Gastrocnemius medialis (tissue), 4 donors: ENCODE measurements at regions of chr1 and their contacts with region 1.

Region 1: DNA sequence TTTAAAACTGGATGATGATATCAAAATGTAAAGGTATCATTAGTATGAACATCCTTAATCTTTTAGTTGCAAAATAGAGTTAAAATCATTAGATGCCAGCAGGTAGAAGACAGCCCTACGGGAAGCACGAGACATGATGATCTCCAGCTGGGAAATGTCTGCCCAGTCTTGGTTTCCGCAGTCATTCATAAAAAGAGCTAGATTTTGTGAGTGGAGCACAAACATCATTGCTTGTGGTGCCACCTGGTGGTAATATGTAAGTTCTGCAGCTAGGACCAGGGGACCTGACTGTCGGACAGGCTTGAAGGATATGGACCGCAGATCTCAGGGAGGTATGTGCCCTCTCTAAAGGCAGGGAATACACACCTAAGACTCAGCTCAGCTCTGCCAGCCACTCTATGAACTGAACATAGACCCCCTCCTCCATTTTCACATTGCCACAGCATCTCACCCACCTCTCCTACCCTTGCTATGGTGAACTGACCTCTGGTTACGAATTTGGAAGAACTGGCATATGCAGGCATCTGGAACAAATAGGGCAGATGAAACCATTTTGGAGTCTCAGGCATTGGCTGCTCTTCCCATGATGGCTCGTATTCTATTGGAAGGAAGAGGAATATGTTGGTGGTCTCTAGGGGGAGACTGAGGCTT is 9.2 kb downstream of the FCMR start:
- DNase-seq: peak; percentile 48 to 69
- ATAC-seq: peak; percentile 55 to 56
- H3K4me3 ChIP-seq: no peak overlapping the region
- H3K27ac ChIP-seq: no peak overlapping the region
- H3K4me1 ChIP-seq: peaks cover 19 to 20% of the 10 kb centered on the region in 2 donors
- H3K27me3 ChIP-seq: peaks cover 0 to 4% (median 0%) of the 10 kb centered on the region in 3 donors
- CTCF ChIP-seq: peak; percentile 76 to 88 (median 87)
- POLR2A ChIP-seq: no peak

Region 2: DNA sequence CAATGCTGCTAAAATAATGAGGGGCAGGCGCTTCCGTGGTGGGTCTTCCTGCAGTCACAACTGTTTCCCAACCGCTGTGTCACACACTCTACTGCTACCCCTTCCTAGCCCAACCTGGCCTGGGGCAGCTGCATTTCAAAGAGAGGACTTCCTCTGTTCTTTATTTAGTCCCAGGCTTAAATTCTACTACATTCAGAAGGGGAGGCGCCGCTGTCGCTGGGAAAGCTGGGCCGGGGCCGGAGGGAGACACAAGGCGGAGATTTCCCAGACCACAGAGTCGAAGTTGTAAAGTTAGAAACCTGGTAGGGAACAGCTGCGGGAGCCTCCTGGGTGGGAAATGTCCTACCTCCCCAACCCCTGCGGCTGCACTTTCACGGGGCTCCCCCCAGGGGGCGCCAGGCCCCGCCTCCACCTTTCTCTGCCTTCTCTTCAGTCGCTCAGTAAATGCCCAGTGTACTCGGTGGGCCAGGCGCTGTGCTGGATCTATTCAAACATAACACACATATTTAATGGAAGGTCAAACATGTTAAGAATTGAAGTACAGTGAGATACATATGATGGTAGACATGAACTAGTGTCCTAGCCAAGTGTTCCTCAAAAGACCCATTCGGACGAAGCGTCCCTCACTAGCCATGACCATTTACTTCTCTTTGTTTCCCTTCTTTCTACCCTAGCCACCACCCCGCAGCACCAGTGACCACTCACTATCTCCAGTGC is 254.1 kb before region 1 on chr1:
- in situ Hi-C with region 1: loop called in 1 of 4 experiments (anchors 10 kb)
- intact Hi-C with region 1: loop called (anchors 1 kb)
- DNase-seq: peak; percentile 43 to 82
- ATAC-seq: peak; percentile 46 to 77
- H3K4me3 ChIP-seq: peak overlapping the region; percentile 42 to 53 (median 44)
- H3K27ac ChIP-seq: peak overlapping the region; percentile 90 to 97 (median 94)
- H3K4me1 ChIP-seq: peaks cover 28 to 56% of the 10 kb centered on the region in 2 donors
- H3K27me3 ChIP-seq: no peaks in the 10 kb centered on the region
- CTCF ChIP-seq: peak; percentile 91 to 96 (median 95)
- POLR2A ChIP-seq: no peak

Region 3: GRCh38 chr1:206725109-206725963 is 187.2 kb before region 1 on chr1:
- in situ Hi-C with region 1: loop called in 3 of 4 experiments (anchors 5 to 10 kb)
- intact Hi-C with region 1: no loop called
- DNase-seq: no peak
- ATAC-seq: no peak
- H3K4me3 ChIP-seq: no peak overlapping the region
- H3K27ac ChIP-seq: peak overlapping the region; percentile 81 to 95 (median 92)
- H3K4me1 ChIP-seq: peaks cover 69 to 75% of the 10 kb centered on the region in 2 donors
- H3K27me3 ChIP-seq: no peaks in the 10 kb centered on the region
- CTCF ChIP-seq: peak in 3 of 5 experiments; percentile 21 to 42 (median 42)
- POLR2A ChIP-seq: no peak

Region 4: GRCh38 chr1:206808615-206809014 is 104.0 kb before region 1 on chr1:
- in situ Hi-C with region 1: no loop called
- intact Hi-C with region 1: loop called (anchors 10 kb)
- DNase-seq: peak in 1 of 2 donors; percentile 17
- ATAC-seq: peak; percentile 63 to 75
- H3K4me3 ChIP-seq: no peak overlapping the region
- H3K27ac ChIP-seq: no peak overlapping the region
- H3K4me1 ChIP-seq: no peaks in the 10 kb centered on the region
- H3K27me3 ChIP-seq: no peaks in the 10 kb centered on the region
- CTCF ChIP-seq: peak in 4 of 5 experiments; percentile 34 to 54 (median 45)
- POLR2A ChIP-seq: no peak

Region 5: DNA sequence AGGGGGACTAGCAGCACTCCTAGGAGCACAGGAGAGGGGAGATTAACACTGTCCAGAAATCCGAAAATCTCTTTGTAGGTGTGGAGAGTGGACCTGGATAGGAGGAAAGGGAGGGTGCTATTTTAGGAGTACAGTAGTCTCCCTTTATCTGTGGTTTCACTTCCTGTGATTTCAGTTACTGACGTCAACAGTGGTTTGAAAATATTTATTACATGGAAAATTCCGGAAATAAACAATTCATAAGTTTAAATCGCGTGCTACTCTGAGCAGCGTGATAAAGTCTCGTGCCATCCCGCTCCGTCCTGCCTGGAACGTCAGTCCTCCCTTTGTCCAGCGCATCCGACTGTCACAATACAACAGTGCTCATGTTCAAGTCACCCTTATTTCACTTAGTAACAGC is 21.9 kb before region 1 on chr1:
- in situ Hi-C with region 1: no loop called
- intact Hi-C with region 1: loop called (anchors 2 kb)
- DNase-seq: no peak
- ATAC-seq: peak in 1 of 2 donors; percentile 34
- H3K4me3 ChIP-seq: peak overlapping the region in 1 of 4 donors; percentile 27
- H3K27ac ChIP-seq: no peak overlapping the region
- H3K4me1 ChIP-seq: peaks cover 17 to 25% of the 10 kb centered on the region in 2 donors
- H3K27me3 ChIP-seq: no peaks in the 10 kb centered on the region
- CTCF ChIP-seq: no peak
- POLR2A ChIP-seq: no peak

Region 6: DNA sequence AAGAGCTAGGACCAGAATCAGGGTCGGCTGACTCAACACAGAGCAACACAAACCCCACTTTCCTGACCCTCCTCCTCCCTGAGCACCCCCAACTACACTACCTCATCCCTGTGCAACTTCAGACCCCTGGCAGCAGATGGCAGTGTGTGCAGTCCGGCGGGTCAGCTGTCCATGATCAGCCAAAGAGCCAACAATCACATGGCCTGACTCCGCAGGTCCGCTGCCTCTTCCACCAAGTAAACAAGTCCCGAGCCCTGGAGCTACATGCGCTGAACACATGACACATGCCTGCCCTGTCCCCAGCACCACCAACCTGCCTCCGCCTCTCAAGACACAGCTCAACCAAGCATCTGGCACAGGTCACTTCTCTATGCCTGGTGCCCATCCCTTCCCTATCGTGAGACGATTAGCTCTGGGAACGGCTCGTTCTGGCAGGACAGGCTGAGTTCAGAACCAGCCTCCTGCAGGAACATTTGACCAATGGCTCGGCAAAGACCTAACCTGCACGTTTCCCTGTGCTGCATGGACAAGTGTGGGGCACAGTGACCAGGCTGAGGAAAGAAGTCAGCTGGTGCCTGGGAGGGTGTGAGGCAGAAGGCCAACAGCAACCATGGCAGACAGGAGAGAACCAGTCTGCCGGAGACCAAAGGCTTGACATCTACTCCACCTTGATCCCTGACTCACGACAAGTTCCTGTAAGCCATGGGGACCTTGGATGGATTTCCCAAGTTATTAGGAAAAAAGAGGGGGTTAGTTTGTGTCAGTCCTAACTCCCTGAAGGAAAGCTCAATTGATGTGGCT is 899.5 kb after region 1 on chr1:
- in situ Hi-C with region 1: no loop called
- intact Hi-C with region 1: loop called (anchors 5 kb)
- DNase-seq: peak; percentile 97
- ATAC-seq: peak; percentile 63 to 64
- H3K4me3 ChIP-seq: peak overlapping the region; percentile 30 to 95 (median 58)
- H3K27ac ChIP-seq: peak overlapping the region; percentile 96 to 100 (median 99)
- H3K4me1 ChIP-seq: peaks cover 92 to 96% of the 10 kb centered on the region in 2 donors
- H3K27me3 ChIP-seq: no peaks in the 10 kb centered on the region
- CTCF ChIP-seq: peak in 4 of 5 experiments; percentile 59 to 81 (median 72)
- POLR2A ChIP-seq: peak; percentile 61 to 78